Activated naive CD4-positive, alpha-beta T cell treated with anti-CD3 and anti-CD28 coated beads for 36 hours (primary cell): ENCODE measurements at regions of chr4 and their contacts with region 1.

Region 1: GRCh38 chr4:183098723-183099536 is at the start of gene WWC2:
- DNase-seq: peak; percentile 64
- H3K4me3 Mint-ChIP-seq: peak within 1 kb of the TSS; percentile 66
- H3K27ac Mint-ChIP-seq: no peak within 1 kb of the TSS
- H3K4me1 Mint-ChIP-seq: peaks cover 13% of the 10 kb centered on the region
- H3K27me3 Mint-ChIP-seq: peaks cover 23% of the 10 kb centered on the region
- total RNA-seq, gene WWC2: 6.7 to 10.0 TPM

Region 2: DNA sequence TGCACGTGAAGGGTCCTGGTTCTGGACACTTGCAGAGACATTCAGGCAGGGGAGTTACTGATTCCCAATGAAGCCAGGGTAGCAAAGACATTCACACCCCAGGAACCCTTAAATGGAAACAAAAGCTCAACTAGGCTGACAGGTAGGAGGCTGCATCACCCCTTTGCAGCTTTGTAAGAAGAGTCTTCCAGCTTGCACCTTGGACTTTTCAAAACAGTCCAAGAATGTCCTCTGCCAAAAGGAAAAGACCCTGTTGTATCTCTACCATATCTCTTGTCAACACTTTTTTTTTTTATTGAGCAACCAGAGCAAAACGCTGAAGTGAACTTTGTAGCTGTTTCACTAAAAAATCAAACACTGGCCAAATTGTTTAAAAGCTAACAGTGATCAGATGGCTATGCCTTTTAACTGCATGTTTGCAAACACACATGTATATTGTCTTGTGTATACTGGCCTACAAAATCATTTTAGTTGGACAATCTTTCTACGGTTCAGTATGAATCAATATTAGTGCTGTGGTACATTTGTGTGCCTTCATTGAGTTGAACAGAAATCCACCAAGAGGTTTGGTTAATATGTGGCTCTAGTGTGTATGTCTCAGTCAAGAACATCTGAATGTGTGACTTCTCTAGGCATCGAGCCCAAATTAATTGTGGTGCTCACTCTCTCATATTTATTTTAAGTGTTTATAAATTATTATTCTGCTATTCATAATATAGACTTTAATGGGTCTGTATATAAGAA is 18.4 kb before region 1 on chr4:
- CTCF ChIA-PET with region 1: no interaction called
- intact Hi-C with region 1: no loop called
- DNase-seq: no peak
- H3K4me3 Mint-ChIP-seq: no peak overlapping the region
- H3K27ac Mint-ChIP-seq: no peak overlapping the region
- H3K4me1 Mint-ChIP-seq: no peaks in the 10 kb centered on the region
- H3K27me3 Mint-ChIP-seq: no peaks in the 10 kb centered on the region

Region 3: DNA sequence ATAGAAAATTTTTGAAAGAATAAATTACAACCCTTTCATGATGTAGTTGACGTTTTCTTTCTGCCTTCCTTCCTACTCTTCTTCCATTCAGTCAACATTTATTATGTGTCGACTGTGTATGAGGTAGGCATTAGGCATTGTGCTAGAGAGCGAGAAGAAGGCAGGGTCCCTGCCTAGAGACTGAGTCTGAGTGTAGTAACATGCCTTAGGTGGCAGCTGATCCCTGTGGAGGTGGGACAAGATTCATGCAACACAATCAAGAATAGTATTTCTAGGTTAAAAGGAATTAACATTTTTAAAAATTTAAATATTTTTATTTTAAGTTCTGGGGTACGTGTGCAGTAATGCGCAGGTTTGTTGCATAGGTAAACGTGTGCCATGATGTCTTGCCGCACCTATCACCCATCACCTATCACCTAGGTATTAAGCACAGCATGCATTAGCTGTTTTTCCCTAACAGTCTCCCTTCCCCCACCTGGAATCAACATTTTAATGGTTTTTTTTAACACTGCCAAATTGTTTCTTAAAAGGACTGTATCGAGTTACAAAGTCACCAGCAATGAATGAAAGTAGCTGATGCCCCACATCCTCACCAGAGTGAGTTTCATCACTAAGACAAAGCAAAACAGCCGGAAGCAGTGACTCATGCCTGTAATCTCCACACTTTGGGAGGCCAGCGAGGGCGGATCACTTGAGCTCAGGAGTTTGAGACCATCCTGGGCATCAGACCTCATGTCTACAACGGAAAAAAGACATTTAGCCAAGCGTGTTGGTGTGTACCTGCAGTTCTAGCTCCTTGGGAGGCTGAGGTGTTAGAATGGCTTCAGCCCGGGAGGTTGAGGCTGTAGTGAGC is 84.2 kb after region 1 on chr4:
- CTCF ChIA-PET with region 1: interaction called, 3 read pairs
- intact Hi-C with region 1: loop called (anchors 5 kb)
- DNase-seq: peak; percentile 31
- H3K4me3 Mint-ChIP-seq: no peak overlapping the region
- H3K27ac Mint-ChIP-seq: no peak overlapping the region
- H3K4me1 Mint-ChIP-seq: peaks cover 32% of the 10 kb centered on the region
- H3K27me3 Mint-ChIP-seq: no peaks in the 10 kb centered on the region

Region 4: GRCh38 chr4:183823434-183823833 is 724.5 kb after region 1 on chr4:
- CTCF ChIA-PET with region 1: no interaction called
- intact Hi-C with region 1: no loop called
- DNase-seq: no peak
- H3K4me3 Mint-ChIP-seq: no peak overlapping the region
- H3K27ac Mint-ChIP-seq: no peak overlapping the region
- H3K4me1 Mint-ChIP-seq: peaks cover 6% of the 10 kb centered on the region
- H3K27me3 Mint-ChIP-seq: no peaks in the 10 kb centered on the region